Dendritic cell treated with granulocyte-macrophage colony-stimulating factor and Interleukin-4, amounts not matched to agents 40 ng/mL and 50 ng/mL, for 4 days (primary cell): ENCODE measurements at regions of chr2 and their contacts with region 1.

Region 1: GRCh38 chr2:209334198-209335017 is 89.4 kb upstream of the MAP2 start:
- H3K4me3 Mint-ChIP-seq: no peak overlapping the region
- H3K27ac Mint-ChIP-seq: no peak overlapping the region
- H3K4me1 Mint-ChIP-seq: no peaks in the 10 kb centered on the region
- H3K27me3 Mint-ChIP-seq: peaks cover 6% of the 10 kb centered on the region

Region 2: DNA sequence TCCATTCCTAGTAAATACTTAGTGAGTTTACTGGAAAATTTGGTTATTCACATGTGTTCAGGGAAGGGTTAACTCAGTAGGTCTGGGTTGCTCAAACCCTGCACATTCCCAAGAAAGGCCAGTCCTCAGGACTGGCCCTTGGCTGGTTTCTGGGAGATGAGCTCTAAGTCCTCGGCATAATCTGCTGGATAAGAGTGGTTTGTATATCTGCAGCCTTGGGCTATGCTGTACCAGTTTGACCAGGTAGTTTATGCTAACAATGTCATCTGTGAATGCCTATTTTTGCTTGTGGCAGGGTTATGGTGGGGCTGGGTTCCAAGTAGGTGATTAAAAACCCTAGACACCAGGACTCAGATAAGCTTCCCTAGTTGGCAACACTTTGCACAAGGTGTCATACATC is 935.2 kb before region 1 on chr2:
- intact Hi-C with region 1: loop called (anchors 5 kb)
- H3K4me3 Mint-ChIP-seq: no peak overlapping the region
- H3K27ac Mint-ChIP-seq: no peak overlapping the region
- H3K4me1 Mint-ChIP-seq: no peaks in the 10 kb centered on the region
- H3K27me3 Mint-ChIP-seq: peaks cover 9% of the 10 kb centered on the region

Region 3: GRCh38 chr2:209423562-209424198 is 89.3 kb after region 1 on chr2 and contains the start of gene MAP2:
- intact Hi-C with region 1: loop called (anchors 1 kb)
- H3K4me3 Mint-ChIP-seq: peak within 1 kb of the TSS; percentile 60
- H3K27ac Mint-ChIP-seq: no peak within 1 kb of the TSS
- H3K4me1 Mint-ChIP-seq: peaks cover 9% of the 10 kb centered on the region
- H3K27me3 Mint-ChIP-seq: peaks cover 45% of the 10 kb centered on the region

Region 4: DNA sequence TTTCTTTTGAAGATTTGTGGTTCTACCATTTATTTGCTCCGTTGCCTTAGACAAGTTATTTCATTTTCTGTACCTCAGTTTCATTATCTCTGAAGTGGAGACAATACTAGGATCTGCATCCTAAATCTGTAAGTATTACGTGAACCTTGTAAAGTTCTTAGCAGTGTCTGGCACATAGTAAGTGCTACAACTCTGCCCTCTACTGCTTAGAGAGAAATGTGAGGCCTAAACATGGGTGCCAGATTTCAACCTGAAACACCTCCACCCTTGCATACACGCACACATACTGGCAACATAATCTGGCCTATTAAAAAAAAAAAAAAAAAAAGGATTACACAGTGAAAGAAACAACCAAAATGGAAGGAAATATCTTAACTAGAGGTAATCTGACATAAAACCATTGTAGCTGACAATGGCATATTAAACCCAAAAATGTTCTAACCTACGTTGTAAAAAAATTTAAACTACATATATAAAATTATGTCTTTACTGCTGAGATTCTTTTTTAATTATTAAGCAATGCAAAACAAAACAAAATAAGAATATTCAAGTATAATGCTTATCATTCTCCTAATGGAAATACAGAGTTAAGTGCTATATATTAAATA is 222.1 kb after region 1 on chr2:
- intact Hi-C with region 1: loop called (anchors 2 kb)
- H3K4me3 Mint-ChIP-seq: no peak overlapping the region
- H3K27ac Mint-ChIP-seq: no peak overlapping the region
- H3K4me1 Mint-ChIP-seq: no peaks in the 10 kb centered on the region
- H3K27me3 Mint-ChIP-seq: peaks cover 2% of the 10 kb centered on the region

Region 5: DNA sequence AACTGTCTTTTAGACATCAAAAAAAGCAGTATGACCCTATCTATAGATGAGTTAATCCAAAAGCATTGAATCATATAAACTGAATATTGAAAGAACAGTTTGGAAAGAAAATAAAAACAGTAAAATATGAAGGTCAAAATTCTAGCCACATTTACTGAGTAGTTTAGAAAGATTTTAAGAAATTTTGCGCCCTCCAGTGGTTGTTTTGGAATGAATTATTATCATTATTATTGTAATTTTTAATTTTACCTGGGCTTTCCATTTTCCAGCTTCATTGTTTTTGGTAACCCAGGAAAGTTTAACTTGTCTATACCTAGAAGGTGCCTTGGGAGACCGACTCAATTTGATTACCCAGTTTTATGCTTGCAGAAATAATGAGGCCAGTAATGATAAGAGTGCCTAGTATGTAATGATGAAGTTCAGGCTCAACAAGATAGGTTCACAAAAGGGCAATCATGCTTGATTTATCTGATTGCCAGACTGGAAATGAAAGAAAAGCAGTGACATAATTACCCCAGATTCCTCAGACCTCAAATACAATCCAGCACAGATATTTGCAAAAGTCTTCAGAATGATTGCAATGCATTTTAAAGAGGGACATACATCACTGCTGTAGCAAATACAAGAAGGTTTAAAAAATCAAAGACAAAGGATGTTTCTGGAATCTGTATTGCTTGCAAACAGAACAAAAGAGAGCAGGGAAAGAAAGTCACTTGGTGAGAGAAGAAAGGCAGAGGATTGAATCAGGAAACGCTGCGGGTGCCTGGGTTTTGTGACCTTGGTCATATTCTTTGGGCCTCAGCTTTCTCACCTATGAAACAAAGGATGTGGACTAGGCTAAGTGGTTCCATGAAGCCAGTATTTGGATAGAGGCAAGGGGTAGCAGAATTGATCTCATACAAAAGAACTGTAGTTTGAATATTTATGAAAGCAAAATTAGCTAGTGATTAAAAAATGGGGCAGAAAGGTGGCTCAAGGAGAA is 243.3 kb after region 1 on chr2:
- intact Hi-C with region 1: loop called (anchors 1 kb)
- H3K4me3 Mint-ChIP-seq: no peak overlapping the region
- H3K27ac Mint-ChIP-seq: no peak overlapping the region
- H3K4me1 Mint-ChIP-seq: peaks cover 5% of the 10 kb centered on the region
- H3K27me3 Mint-ChIP-seq: peaks cover 2% of the 10 kb centered on the region

Region 6: GRCh38 chr2:209960676-209961630 is 626.5 kb after region 1 on chr2:
- intact Hi-C with region 1: loop called (anchors 5 kb)
- H3K4me3 Mint-ChIP-seq: no peak overlapping the region
- H3K27ac Mint-ChIP-seq: no peak overlapping the region
- H3K4me1 Mint-ChIP-seq: peaks cover 6% of the 10 kb centered on the region
- H3K27me3 Mint-ChIP-seq: peaks cover 3% of the 10 kb centered on the region

Region 7: GRCh38 chr2:210195101-210195852 is 860.9 kb after region 1 on chr2:
- intact Hi-C with region 1: loop called (anchors 10 kb)
- H3K4me3 Mint-ChIP-seq: no peak overlapping the region
- H3K27ac Mint-ChIP-seq: no peak overlapping the region
- H3K4me1 Mint-ChIP-seq: no peaks in the 10 kb centered on the region
- H3K27me3 Mint-ChIP-seq: no peaks in the 10 kb centered on the region